PC-3 (cell line): ENCODE measurements at regions of chr14 and their contacts with region 1.

Region 1: DNA sequence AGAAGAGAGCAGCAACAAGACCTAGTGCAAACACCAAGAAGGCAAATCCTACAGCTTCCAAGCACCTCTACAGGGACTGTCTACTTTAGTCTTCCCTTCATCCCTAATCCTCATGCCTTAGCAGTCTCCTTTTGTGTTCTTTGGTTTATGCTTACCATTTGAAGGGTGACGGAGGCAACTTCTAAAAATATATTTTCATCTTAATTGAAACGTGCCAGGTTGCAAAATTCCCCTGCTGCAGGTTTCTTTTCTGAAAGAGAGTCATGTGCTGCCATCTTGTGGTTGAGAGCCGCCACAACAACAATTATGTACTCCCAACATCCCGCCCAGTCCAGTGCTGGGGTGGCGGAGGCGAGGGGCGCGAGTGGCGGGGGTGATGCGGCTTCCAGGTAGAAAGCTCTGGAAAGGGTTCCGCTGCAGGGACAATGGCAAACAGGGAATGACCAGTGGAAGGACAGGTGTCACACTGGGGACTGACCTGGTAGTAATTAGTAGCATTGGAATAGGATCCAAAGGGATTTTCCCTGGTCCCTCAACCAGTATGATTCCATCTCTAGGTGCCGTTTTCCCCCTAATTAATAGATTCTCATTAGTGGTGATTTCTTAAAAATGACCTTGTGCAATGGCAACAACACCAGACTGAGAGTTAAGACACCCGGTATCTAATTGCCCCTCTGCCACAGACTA is 80.3 kb upstream of the GNG2 start:
- DNase-seq: peak; percentile 85
- ATAC-seq: peak; percentile 58
- H3K4me3 ChIP-seq: peak overlapping the region; percentile 41
- H3K27ac ChIP-seq: no peak overlapping the region
- H3K4me1 ChIP-seq: peaks cover 4% of the 10 kb centered on the region; the same call in 1 of the 2 replicates
- H3K27me3 ChIP-seq: no peaks in the 10 kb centered on the region
- CTCF ChIP-seq: peak; percentile 97

Region 2: GRCh38 chr14:50954811-50955372 is 825.3 kb before region 1 on chr14:
- CTCF ChIA-PET with region 1: no interaction called
- POLR2A ChIA-PET with region 1: no interaction called
- intact Hi-C with region 1: loop called (anchors 10 kb)
- DNase-seq: peak; percentile 82
- ATAC-seq: peak; percentile 69
- H3K4me3 ChIP-seq: peak overlapping the region; percentile 20; the same call in 1 of the 2 replicates
- H3K27ac ChIP-seq: peak overlapping the region; percentile 89
- H3K4me1 ChIP-seq: peaks cover 19% of the 10 kb centered on the region
- H3K27me3 ChIP-seq: no peaks in the 10 kb centered on the region
- CTCF ChIP-seq: peak; percentile 91

Region 3: DNA sequence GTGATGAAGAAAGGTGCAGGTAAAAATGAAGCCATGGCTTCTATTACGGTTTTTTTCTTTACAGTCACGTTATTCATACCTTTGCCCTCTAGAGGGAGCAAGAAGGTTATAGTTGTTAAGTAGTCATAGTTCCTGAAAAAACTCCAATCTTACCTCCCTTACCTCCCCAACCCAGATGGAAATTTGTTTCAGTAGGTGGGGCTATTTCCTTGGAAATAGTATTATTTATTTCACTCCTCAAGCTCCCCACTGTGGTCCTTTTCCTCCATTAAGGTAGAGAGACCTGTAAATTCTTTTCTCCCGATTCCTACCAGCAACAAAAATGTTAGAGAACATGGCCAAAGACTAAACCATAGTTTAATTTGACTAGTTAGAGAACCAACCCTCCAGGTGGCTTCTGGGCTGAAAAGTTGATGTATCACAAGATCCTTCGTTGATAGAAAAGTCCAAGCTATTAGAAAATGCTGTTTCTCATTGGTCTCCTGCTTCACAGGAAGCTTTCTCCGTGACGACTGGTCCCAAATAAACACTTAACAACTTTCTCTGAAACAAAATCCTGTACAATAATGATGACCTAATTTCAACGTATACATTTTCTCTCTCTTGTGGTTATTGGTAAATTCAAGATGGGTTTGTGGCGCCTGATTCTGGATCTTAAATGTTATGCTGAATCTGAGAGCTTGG is 496.6 kb before region 1 on chr14:
- CTCF ChIA-PET with region 1: interaction called, 37 read pairs
- POLR2A ChIA-PET with region 1: no interaction called
- intact Hi-C with region 1: loop called (anchors 1 kb)
- DNase-seq: peak; percentile 98
- ATAC-seq: peak; percentile 96
- H3K4me3 ChIP-seq: no peak overlapping the region
- H3K27ac ChIP-seq: peak overlapping the region; percentile 2; the same call in 1 of the 2 replicates
- H3K4me1 ChIP-seq: peaks cover 10% of the 10 kb centered on the region
- H3K27me3 ChIP-seq: no peaks in the 10 kb centered on the region
- CTCF ChIP-seq: peak; percentile 99

Region 4: DNA sequence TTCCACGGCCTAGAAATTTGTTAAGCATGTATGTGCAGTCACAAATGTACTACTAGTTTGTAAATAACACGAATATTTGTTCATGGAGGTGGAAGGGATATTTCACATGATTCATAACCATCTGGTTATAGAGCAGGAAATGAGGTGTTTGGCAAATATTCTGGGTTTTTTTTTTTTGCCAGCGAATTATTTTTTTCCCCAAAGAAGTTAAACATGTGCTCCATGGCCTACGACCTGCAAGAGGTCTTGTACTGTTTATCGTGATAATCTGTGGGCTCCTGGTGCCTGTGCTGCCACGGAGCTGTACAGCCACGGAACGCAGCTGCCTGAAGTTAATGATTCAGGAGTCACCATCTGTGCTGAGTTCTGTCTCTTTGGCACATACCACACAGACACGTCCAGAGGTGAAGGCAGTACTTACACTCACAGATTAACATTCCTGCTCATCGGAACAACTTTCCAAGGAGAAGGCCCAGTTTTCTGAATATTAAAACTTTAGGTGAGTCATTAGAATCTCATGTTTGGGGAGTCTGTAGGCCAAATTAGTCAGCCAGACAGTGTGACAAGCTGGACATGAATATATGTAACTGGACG is 383.8 kb before region 1 on chr14:
- CTCF ChIA-PET with region 1: no interaction called
- POLR2A ChIA-PET with region 1: interaction called, 34 read pairs
- intact Hi-C with region 1: loop called (anchors 1 kb)
- DNase-seq: peak; percentile 99
- ATAC-seq: peak; percentile 48
- H3K4me3 ChIP-seq: peak overlapping the region; percentile 32; the same call in 1 of the 2 replicates
- H3K27ac ChIP-seq: peak overlapping the region; percentile 98
- H3K4me1 ChIP-seq: peaks cover 61% of the 10 kb centered on the region
- H3K27me3 ChIP-seq: no peaks in the 10 kb centered on the region
- CTCF ChIP-seq: no peak

Region 5: GRCh38 chr14:51554953-51555352 is 225.2 kb before region 1 on chr14:
- CTCF ChIA-PET with region 1: interaction called, 3 read pairs
- POLR2A ChIA-PET with region 1: no interaction called
- intact Hi-C with region 1: loop called (anchors 1 kb)
- DNase-seq: peak; percentile 67
- ATAC-seq: peak; percentile 50
- H3K4me3 ChIP-seq: peak overlapping the region; percentile 47
- H3K27ac ChIP-seq: peak overlapping the region; percentile 72
- H3K4me1 ChIP-seq: peaks cover 47% of the 10 kb centered on the region
- H3K27me3 ChIP-seq: no peaks in the 10 kb centered on the region
- CTCF ChIP-seq: peak; percentile 67

Region 6: DNA sequence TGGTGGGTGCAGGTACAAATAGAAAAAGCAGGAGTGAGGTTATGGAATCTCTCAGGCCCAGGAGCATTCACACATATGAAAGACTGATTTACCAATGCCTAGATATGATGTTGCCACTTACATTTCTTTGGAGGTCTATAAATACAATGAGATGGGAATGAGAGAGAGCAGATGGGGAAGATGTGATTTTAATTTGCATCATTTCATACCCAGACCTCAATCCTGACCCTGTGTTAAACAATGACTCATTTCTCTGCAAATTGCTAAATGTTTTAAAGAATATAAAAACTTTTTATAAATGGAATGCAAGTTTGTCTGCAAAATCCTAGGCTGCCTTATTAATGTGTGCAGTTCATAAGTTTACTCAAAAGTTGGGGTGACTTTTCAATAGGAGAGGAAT is 41.7 kb after region 1 on chr14:
- CTCF ChIA-PET with region 1: interaction called, 3 read pairs
- POLR2A ChIA-PET with region 1: no interaction called
- intact Hi-C with region 1: loop called (anchors 2 kb)
- DNase-seq: peak; percentile 9
- ATAC-seq: peak; percentile 55
- H3K4me3 ChIP-seq: no peak overlapping the region
- H3K27ac ChIP-seq: no peak overlapping the region
- H3K4me1 ChIP-seq: peaks cover 25% of the 10 kb centered on the region
- H3K27me3 ChIP-seq: no peaks in the 10 kb centered on the region
- CTCF ChIP-seq: no peak

Region 7: GRCh38 chr14:51979088-51979709 is 199.1 kb after region 1 on chr14:
- CTCF ChIA-PET with region 1: interaction called, 6 read pairs
- POLR2A ChIA-PET with region 1: no interaction called
- intact Hi-C with region 1: loop called (anchors 1 kb)
- DNase-seq: peak; percentile 93
- ATAC-seq: peak; percentile 96
- H3K4me3 ChIP-seq: no peak overlapping the region
- H3K27ac ChIP-seq: no peak overlapping the region
- H3K4me1 ChIP-seq: no peaks in the 10 kb centered on the region
- H3K27me3 ChIP-seq: no peaks in the 10 kb centered on the region
- CTCF ChIP-seq: peak; percentile 97